ENCODE measurements at regions of chr2 and their contacts with region 1.

Region 1: GRCh38 chr2:33583194-33583938 is 15.7 kb downstream of the FAM98A start:
- DNase-seq: no peak
- ATAC-seq: no peak
- H3K4me3 ChIP-seq: no peak overlapping the region
- H3K27ac ChIP-seq: no peak overlapping the region
- H3K4me1 ChIP-seq: no peaks in the 10 kb centered on the region
- H3K27me3 ChIP-seq: no peaks in the 10 kb centered on the region
- CTCF ChIP-seq: peak; percentile 83; the same call in 1 of the 2 replicates

Region 2: GRCh38 chr2:33022989-33023727 is 560.2 kb before region 1 on chr2:
- CTCF ChIA-PET with region 1: no interaction called
- POLR2A ChIA-PET with region 1: no interaction called
- in situ Hi-C with region 1: no loop called
- intact Hi-C with region 1: no loop called
- DNase-seq: peak; percentile 66
- ATAC-seq: peak; percentile 75
- H3K4me3 ChIP-seq: no peak overlapping the region
- H3K27ac ChIP-seq: no peak overlapping the region
- H3K4me1 ChIP-seq: no peaks in the 10 kb centered on the region
- H3K27me3 ChIP-seq: no peaks in the 10 kb centered on the region
- CTCF ChIP-seq: no peak

Region 3: DNA sequence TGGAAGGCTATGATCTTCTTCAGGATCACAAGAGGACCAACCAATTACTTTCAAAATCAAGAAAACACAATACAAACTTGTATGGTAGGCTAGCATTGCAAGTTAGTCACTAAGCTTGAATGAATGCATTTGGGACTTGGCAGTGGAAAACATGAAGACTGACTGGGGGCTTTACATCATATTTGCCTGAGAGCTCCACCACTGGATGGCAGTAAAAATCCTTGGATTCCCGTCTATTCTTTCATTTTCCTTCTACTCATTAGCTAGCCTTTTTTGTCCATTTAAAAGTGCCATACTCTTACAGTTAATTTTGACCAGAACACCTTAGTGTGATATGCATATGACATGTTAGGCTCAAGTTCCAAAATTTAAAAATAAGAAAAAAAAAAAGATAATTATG is 170.4 kb before region 1 on chr2:
- CTCF ChIA-PET with region 1: no interaction called
- POLR2A ChIA-PET with region 1: no interaction called
- in situ Hi-C with region 1: no loop called
- intact Hi-C with region 1: loop called (anchors 5 kb)
- DNase-seq: no peak
- ATAC-seq: peak; percentile 45; the same call in 1 of the 2 replicates
- H3K4me3 ChIP-seq: no peak overlapping the region
- H3K27ac ChIP-seq: no peak overlapping the region
- H3K4me1 ChIP-seq: no peaks in the 10 kb centered on the region
- H3K27me3 ChIP-seq: no peaks in the 10 kb centered on the region
- CTCF ChIP-seq: peak; percentile 59

Region 4: GRCh38 chr2:33475224-33476130 is 107.9 kb before region 1 on chr2:
- CTCF ChIA-PET with region 1: interaction called, 4 read pairs
- POLR2A ChIA-PET with region 1: no interaction called
- in situ Hi-C with region 1: no loop called
- intact Hi-C with region 1: loop called (anchors 5 kb)
- DNase-seq: peak; percentile 87
- ATAC-seq: peak; percentile 88
- H3K4me3 ChIP-seq: peak overlapping the region; percentile 80 to 94
- H3K27ac ChIP-seq: peak overlapping the region; percentile 71
- H3K4me1 ChIP-seq: no peaks in the 10 kb centered on the region; the same call in 1 of the 2 replicates
- H3K27me3 ChIP-seq: no peaks in the 10 kb centered on the region
- CTCF ChIP-seq: peak; percentile 92

Region 5: GRCh38 chr2:33570681-33571080 is 12.7 kb before region 1 on chr2:
- CTCF ChIA-PET with region 1: no interaction called
- POLR2A ChIA-PET with region 1: interaction called, 11 read pairs
- in situ Hi-C with region 1: no loop called
- intact Hi-C with region 1: no loop called
- DNase-seq: no peak
- ATAC-seq: no peak
- H3K4me3 ChIP-seq: no peak overlapping the region
- H3K27ac ChIP-seq: no peak overlapping the region
- H3K4me1 ChIP-seq: no peaks in the 10 kb centered on the region
- H3K27me3 ChIP-seq: no peaks in the 10 kb centered on the region
- CTCF ChIP-seq: no peak

Measured in Panc1 (cell line).